ENCODE measurements at regions of chr10 and their contacts with region 1.

Region 1: GRCh38 chr10:89100680-89101079 is 106.4 kb downstream of the CH25H start:
- DNase-seq: no peak

Region 2: DNA sequence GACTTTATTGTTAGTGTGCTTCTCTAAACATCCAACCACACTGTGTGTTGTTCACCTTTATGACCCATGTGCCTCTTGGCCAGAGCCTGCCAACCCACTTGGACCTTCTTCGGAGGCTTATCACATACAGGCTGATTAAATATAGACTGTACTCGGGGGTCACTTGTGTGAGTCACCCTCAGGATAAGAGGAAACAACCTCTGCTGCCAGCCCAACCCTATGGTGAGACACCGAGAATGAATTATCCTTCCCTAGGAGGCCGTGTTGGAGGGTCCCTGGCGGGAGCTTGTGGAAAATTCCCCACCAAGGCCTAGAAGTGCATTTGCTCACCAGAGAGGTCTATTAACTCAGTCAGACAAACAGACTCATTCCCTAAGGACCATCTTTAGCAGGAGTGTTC is 47.1 kb before region 1 on chr10:
- intact Hi-C with region 1: loop called (anchors 10 kb)
- DNase-seq: no peak

Region 3: GRCh38 chr10:89563861-89564478 is 463.3 kb after region 1 on chr10:
- intact Hi-C with region 1: no loop called
- DNase-seq: no peak